Activated naive CD4-positive, alpha-beta T cell treated with anti-CD3 and anti-CD28 coated beads for 36 hours (primary cell): ENCODE measurements at regions of chr1 and their contacts with region 1.

Region 1: GRCh38 chr1:110766025-110766647 is 91.4 kb upstream of the KCNA3 start:
- DNase-seq: peak; percentile 75
- H3K4me3 Mint-ChIP-seq: no peak overlapping the region
- H3K27ac Mint-ChIP-seq: no peak overlapping the region
- H3K4me1 Mint-ChIP-seq: peaks cover 2% of the 10 kb centered on the region
- H3K27me3 Mint-ChIP-seq: peaks cover 2% of the 10 kb centered on the region

Region 2: DNA sequence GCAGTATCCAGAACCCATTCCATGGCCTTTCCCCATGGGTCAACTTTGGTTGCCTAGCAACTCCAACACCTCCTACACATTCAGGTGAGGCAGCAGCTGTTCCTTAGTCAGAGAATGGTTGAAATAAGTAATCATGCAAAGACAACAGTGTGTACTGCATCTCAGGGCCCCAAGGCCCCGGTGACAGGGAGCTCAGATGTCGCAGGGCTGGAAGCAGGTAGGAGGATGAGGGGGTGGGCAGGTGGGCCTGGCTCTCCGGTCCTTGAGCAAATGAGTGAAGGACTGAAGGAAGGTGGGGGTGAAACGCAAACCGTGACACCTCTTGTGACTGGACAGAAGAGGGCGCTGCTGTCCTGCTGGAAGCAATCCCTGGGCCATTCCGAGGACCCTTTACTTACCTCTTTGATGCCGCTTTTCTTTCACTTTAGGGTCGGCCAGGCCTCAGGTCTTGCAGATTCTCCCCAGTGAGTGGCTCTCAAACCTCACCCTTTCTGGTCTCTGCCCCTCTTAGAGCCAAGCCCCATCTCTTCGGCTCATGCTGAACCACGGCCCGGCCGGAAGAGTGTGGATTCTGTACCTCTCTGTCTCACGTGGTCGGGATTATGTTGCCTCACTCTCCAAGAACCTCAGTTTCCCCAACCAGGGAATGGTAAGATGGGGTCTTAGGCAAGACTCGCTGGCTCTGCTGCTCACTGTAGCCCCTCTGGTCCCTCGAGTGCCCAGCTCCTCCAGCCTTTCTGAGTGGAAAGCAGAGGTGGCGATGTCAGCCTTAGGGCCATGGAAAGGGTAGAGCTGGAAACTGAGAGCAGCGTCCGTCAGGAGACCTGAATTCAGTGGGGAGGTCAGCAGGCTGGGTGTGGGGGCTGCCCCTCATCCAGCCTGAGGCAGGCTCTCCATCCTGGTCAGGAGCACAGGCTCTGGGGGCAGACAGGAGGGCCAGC is 241.6 kb before region 1 on chr1:
- CTCF ChIA-PET with region 1: interaction called, 15 read pairs
- intact Hi-C with region 1: no loop called
- DNase-seq: peak; percentile 70
- H3K4me3 Mint-ChIP-seq: no peak overlapping the region
- H3K27ac Mint-ChIP-seq: no peak overlapping the region
- H3K4me1 Mint-ChIP-seq: no peaks in the 10 kb centered on the region
- H3K27me3 Mint-ChIP-seq: peaks cover 12% of the 10 kb centered on the region

Region 3: DNA sequence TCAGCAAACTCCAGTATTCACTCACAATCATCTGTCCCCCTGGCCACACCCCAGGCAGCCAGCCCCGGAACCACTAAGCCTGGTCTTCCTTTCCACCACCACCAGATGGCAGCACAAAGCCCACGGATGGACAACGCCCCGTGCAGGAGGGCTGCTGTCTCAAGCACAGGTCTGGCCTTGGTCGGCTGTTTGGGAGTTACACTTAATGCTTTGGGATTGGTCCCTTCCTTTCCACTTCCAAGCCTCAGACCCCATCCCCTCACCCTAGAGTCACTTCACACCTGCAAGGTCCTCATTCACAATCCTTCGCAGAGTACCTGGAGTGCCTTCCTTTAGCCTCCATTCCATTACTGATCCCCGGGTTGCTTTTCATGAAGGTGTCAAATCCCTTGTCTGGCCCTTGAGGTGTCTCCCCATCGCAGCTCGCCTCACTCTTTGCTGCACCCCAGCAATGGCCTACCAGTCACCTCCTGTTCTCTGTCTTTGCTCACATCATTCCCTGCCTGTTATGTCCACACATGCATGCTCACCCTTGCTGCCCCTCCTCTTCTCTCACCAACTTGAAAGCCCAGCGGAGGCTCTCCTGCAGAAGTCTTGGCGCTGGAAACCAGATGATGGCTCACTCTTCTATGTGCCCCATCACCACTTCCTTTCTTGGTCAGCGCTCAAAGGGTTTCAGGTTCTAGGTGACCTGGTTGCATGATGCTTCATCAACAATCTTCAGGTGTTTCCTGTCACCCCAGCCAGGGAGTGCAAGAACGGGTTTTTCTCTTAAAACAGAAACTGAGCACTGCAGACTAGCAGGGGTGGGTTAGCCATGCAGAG is 135.1 kb before region 1 on chr1:
- CTCF ChIA-PET with region 1: interaction called, 72 read pairs
- intact Hi-C with region 1: loop called (anchors 1 kb)
- DNase-seq: peak; percentile 92
- H3K4me3 Mint-ChIP-seq: no peak overlapping the region
- H3K27ac Mint-ChIP-seq: no peak overlapping the region
- H3K4me1 Mint-ChIP-seq: peaks cover 54% of the 10 kb centered on the region
- H3K27me3 Mint-ChIP-seq: no peaks in the 10 kb centered on the region

Region 4: GRCh38 chr1:110726755-110727154 is 39.4 kb before region 1 on chr1:
- CTCF ChIA-PET with region 1: interaction called, 12 read pairs
- intact Hi-C with region 1: no loop called
- DNase-seq: no peak
- H3K4me3 Mint-ChIP-seq: no peak overlapping the region
- H3K27ac Mint-ChIP-seq: peak overlapping the region; percentile 22
- H3K4me1 Mint-ChIP-seq: peaks cover 31% of the 10 kb centered on the region
- H3K27me3 Mint-ChIP-seq: no peaks in the 10 kb centered on the region

Region 5: DNA sequence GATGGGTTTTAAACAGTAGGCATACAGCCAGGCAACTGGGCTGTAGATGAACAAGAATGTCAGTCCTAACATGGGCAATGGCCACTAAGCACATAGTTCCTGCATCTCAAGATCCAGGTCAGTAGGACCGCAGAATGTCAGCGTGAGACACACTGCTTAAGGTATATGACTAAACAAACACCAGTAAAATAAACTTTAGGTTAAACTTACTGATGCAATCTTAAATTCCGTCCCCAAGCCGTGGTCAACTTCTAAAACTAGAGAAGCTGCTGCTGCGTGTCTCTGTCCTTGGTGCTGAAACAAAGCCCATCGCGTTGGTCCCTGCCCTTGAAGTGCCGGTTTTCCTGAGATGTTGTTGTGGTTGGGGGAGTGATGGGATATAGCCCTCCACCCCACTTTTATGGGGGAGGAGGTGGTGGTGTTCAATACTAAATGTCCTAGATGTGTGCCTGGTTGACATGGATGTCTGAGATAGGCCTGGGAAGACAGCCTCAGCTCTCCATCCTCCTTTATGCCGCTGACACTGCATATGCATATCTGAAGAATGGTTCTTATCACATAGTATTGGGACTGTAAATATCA is 19.5 kb before region 1 on chr1:
- CTCF ChIA-PET with region 1: interaction called, 11 read pairs
- intact Hi-C with region 1: no loop called
- DNase-seq: peak; percentile 77
- H3K4me3 Mint-ChIP-seq: no peak overlapping the region
- H3K27ac Mint-ChIP-seq: no peak overlapping the region
- H3K4me1 Mint-ChIP-seq: no peaks in the 10 kb centered on the region
- H3K27me3 Mint-ChIP-seq: peaks cover 6% of the 10 kb centered on the region